ENCODE measurements at regions of chr1 and their contacts with region 1.

Region 1: DNA sequence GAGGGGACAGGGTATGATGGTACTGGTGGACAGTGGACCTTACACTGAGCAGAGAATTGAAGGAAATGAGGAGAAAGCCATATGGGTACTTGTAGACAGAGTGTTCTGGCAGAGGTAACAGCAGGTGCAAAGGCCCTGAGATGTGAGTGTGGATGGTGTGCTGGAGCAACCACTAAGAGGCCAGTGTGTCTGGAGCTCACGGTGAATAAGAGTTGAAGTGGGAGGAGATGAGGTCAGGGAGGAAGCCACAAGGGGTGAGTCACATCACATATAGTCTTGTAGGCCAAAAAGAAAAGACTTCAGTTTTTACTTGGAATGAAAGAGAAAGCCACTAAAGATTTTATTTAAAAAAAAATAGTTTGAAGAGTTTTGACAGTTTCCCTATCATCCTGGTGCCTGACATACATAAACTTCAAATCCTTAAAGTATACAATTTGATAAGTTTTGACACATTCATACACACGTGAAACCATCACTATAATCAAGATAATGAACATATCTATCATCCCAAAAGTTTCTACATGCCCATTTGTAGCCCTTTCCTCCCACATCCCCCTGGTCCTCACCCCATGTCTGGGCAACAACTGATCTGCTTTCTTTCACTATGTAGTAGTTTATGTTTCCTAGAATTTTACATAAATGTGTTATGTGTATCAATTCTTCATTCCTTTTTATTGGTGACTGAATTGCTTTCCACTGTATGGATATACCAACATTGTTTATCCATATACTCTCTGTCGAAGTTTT is 148.4 kb downstream of the GPATCH2 start:
- DNase-seq: peak; percentile 80
- H3K4me3 Mint-ChIP-seq: no peak overlapping the region
- H3K27ac Mint-ChIP-seq: peak overlapping the region; percentile 51
- H3K4me1 Mint-ChIP-seq: peaks cover 21% of the 10 kb centered on the region
- H3K27me3 Mint-ChIP-seq: no peaks in the 10 kb centered on the region

Region 2: GRCh38 chr1:217407534-217408001 is 75.0 kb before region 1 on chr1:
- CTCF ChIA-PET with region 1: no interaction called
- intact Hi-C with region 1: no loop called
- DNase-seq: no peak
- H3K4me3 Mint-ChIP-seq: no peak overlapping the region
- H3K27ac Mint-ChIP-seq: no peak overlapping the region
- H3K4me1 Mint-ChIP-seq: no peaks in the 10 kb centered on the region
- H3K27me3 Mint-ChIP-seq: peaks cover 7% of the 10 kb centered on the region

Region 3: GRCh38 chr1:217495249-217495648 is 12.7 kb after region 1 on chr1:
- CTCF ChIA-PET with region 1: no interaction called
- intact Hi-C with region 1: loop called (anchors 1 kb)
- DNase-seq: no peak
- H3K4me3 Mint-ChIP-seq: no peak overlapping the region
- H3K27ac Mint-ChIP-seq: peak overlapping the region; percentile 36
- H3K4me1 Mint-ChIP-seq: peaks cover 5% of the 10 kb centered on the region
- H3K27me3 Mint-ChIP-seq: no peaks in the 10 kb centered on the region

Region 4: DNA sequence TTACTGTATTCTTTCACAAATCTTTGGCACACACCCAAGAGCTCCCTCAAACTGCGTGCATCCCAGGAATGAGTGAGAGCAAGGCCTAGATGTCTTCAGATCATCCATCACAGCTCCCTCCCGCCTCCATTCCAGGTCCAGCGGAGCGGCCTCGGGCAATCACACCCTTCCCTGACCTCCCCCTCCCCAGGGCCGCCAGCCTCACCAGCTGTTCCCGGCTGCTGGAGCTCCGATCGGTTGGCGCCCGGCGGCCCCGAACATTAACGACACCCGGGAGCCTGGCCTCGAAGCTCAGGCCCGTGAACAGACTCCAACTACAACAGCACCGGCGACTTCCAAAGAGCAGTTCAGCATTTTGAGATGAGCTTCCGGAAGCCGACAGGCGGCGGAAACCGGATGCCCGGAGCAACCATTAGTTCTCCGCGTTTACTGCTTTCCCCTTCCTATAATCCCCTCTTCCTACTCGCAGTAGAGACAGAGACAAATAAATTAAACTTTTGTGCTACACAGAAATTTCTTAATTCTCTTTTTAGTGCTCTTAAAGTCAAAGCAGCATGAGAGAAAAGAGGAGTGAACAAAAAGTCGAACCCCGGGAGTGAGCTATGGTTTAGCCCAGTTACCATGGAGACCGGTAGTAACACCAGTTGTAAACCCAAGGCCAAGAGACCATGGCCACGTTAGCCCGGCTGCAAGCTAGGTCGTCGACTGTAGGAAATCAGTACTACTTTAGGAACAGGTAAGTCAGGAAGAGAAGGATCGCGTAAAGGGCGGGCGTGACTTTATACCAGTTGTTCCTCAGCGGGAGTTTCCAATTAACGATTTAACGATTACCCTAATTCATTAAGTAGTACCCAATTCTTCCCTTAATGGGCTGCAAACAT is 148.4 kb after region 1 on chr1 and contains the starts of genes GPATCH2 and SPATA17:
- CTCF ChIA-PET with region 1: no interaction called
- intact Hi-C with region 1: loop called (anchors 1 kb)
- DNase-seq: peak; percentile 80
- H3K4me3 Mint-ChIP-seq: peak within 1 kb of the TSS; percentile 93
- H3K27ac Mint-ChIP-seq: peak within 1 kb of the TSS; percentile 99
- H3K4me1 Mint-ChIP-seq: peaks cover 31% of the 10 kb centered on the region
- H3K27me3 Mint-ChIP-seq: peaks cover 6% of the 10 kb centered on the region
- total RNA-seq, gene GPATCH2: 4.8 to 6.2 TPM
- total RNA-seq, gene SPATA17: not detected